Endothelial cell of umbilical vein (primary cell): ENCODE measurements at regions of chr21 and their contacts with region 1.

Region 1: DNA sequence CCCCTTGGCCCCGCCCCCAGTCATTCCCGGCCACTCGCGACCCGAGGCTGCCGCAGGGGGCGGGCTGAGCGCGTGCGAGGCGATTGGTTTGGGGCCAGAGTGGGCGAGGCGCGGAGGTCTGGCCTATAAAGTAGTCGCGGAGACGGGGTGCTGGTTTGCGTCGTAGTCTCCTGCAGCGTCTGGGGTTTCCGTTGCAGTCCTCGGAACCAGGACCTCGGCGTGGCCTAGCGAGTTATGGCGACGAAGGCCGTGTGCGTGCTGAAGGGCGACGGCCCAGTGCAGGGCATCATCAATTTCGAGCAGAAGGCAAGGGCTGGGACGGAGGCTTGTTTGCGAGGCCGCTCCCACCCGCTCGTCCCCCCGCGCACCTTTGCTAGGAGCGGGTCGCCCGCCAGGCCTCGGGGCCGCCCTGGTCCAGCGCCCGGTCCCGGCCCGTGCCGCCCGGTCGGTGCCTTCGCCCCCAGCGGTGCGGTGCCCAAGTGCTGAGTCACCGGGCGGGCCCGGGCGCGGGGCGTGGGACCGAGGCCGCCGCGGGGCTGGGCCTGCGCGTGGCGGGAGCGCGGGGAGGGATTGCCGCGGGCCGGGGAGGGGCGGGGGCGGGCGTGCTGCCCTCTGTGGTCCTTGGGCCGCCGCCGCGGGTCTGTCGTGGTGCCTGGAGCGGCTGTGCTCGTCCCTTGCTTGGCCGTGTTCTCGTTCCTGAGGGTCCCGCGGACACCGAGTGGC is at the start of gene SOD1:
- DNase-seq: peak; percentile 92
- H3K4me3 ChIP-seq: peak within 1 kb of the TSS; percentile 73 to 92 (median 89)
- H3K27ac ChIP-seq: peak within 1 kb of the TSS; percentile 26
- H3K4me1 ChIP-seq: peaks cover 7% of the 10 kb centered on the region
- H3K27me3 ChIP-seq: no peaks in the 10 kb centered on the region
- CTCF ChIP-seq: peak in 1 of 2 donors; percentile 3
- POLR2A ChIP-seq: peak; percentile 96
- total RNA-seq, gene SOD1: 190 and 198 TPM in 2 replicates

Region 2: GRCh38 chr21:31490443-31490842 is 169.3 kb before region 1 on chr21:
- CTCF ChIA-PET with region 1: no interaction called
- POLR2A ChIA-PET with region 1: no interaction called
- dilution Hi-C with region 1: no loop called
- intact Hi-C with region 1: no loop called
- DNase-seq: no peak
- H3K4me3 ChIP-seq: no peak overlapping the region
- H3K27ac ChIP-seq: no peak overlapping the region
- H3K4me1 ChIP-seq: no peaks in the 10 kb centered on the region
- H3K27me3 ChIP-seq: no peaks in the 10 kb centered on the region
- CTCF ChIP-seq: no peak
- POLR2A ChIP-seq: no peak

Region 3: GRCh38 chr21:31629972-31630711 is 29.6 kb before region 1 on chr21:
- CTCF ChIA-PET with region 1: no interaction called
- POLR2A ChIA-PET with region 1: no interaction called
- dilution Hi-C with region 1: no loop called
- intact Hi-C with region 1: loop called (anchors 1 kb)
- DNase-seq: peak; percentile 96
- H3K4me3 ChIP-seq: no peak overlapping the region
- H3K27ac ChIP-seq: no peak overlapping the region
- H3K4me1 ChIP-seq: peaks cover 11% of the 10 kb centered on the region
- H3K27me3 ChIP-seq: no peaks in the 10 kb centered on the region
- CTCF ChIP-seq: no peak
- POLR2A ChIP-seq: no peak